ENCODE measurements at regions of chr2 and their contacts with region 1.

Region 1: DNA sequence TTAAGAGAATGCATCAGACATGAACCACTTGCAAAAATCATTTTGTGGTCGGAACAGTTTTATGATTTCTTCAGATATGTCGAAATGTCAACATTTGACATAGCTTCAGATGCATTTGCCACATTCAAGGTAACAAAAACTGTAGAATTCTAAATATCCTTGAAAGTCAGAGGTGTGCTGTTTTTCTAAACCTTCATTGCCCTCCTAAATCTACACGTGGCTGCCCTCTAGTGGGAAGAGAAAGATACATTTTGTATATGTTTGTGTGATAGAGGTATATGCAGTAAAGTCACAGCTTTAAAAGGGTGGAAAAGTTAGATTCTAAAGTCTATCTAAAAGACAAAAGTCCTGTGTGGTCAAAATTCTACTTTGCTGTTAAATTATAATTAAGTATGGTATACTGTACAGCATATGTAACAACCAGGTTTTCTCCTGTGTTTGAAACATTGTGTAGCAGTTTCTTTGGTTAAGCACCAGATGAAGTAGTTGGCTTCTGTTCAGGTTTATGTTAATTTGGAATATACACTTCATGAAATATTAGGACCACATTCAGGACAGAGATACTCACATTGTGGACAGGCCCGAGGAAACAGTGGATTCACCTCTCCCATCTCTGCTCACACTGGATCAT is 65.9 kb upstream of the ITM2C start:
- DNase-seq: no peak
- H3K4me3 ChIP-seq: no peak overlapping the region
- CTCF ChIP-seq: peak; percentile 69

Region 2: GRCh38 chr2:230680463-230681170 is 118.3 kb before region 1 on chr2:
- CTCF ChIA-PET with region 1: interaction called, 14 read pairs
- POLR2A ChIA-PET with region 1: no interaction called
- DNase-seq: no peak
- H3K4me3 ChIP-seq: no peak overlapping the region
- CTCF ChIP-seq: no peak

Region 3: DNA sequence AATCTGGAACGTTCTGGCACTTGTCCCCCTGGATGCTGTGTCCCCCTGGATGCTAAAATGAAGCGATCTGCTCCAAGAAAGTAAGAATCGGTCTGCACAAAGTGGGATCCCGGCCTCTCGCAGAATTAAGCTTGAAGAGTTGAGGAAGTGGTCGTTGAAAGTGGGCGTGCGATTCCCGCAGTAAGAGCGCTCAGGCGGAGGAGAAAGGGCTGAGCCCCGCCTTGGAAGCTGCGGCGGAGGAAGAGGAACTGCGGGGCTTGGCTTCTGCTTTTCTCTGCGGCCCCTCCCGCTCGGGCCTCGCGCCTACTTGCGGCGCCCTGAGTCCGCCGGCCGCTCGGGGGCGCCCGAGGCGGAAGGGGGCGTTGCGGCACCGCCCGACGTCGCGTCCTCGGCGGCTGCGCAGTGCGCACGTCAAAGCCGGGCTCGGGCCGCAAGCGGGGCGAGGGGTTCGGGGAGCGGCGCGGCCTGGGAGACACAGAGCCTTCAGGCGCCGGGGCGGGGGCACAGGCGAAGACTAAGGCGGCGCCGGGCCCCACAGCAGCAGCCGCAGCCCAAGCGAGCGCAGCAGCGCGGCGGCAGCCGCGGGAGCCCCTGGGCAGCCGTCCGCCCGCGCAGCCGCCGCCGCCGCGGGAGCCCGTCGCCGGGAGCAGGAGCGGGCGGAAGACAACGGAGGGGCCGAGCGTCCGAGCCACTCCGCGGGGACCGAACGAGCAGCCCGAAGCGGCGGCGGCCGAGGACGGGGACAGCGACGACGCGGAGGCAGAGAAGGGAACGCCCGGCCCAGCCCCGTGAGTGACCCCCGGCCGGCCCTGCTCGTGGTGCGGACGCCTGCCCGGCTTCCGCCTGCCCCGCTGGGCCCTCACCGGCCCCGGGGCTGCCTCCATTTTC is 86.2 kb before region 1 on chr2 and contains the start of gene CAB39:
- CTCF ChIA-PET with region 1: interaction called, 80 read pairs
- POLR2A ChIA-PET with region 1: interaction called, 4 read pairs
- DNase-seq: no peak
- H3K4me3 ChIP-seq: peak within 1 kb of the TSS; percentile 77
- CTCF ChIP-seq: peak; percentile 85

Region 4: DNA sequence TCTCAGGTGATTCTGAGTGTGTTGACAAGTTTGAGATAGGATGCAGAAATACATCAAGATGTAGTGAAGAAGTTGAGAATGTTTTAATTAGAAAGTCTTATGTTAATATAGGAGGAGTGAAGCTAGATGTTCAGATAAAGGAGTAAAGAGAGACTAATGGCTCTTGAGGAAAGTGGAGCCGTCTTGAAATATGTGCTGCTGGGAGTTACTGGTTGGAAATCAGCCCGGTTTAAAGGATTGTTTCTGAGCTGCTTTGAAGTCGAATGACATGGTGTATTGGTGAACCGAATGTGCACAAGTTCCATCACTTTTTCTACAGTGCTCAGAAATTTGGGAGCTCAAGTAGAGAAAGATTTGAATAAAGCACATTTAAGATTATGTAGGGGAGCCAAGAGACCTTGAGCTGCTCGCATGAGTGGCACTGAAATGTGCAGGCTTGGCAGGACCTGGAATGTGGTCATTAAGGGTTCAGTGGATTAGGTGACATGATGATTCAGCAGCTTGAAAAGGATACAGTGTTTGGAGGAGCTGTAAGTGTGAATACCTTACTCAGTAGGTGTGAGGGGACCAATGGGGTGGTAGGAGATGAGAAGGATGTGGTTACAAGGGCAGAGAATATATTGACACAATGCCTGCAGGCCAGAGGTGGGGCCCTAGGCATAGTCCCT is 17.6 kb before region 1 on chr2:
- CTCF ChIA-PET with region 1: interaction called, 18 read pairs
- POLR2A ChIA-PET with region 1: no interaction called
- DNase-seq: no peak
- H3K4me3 ChIP-seq: no peak overlapping the region
- CTCF ChIP-seq: no peak

Region 5: DNA sequence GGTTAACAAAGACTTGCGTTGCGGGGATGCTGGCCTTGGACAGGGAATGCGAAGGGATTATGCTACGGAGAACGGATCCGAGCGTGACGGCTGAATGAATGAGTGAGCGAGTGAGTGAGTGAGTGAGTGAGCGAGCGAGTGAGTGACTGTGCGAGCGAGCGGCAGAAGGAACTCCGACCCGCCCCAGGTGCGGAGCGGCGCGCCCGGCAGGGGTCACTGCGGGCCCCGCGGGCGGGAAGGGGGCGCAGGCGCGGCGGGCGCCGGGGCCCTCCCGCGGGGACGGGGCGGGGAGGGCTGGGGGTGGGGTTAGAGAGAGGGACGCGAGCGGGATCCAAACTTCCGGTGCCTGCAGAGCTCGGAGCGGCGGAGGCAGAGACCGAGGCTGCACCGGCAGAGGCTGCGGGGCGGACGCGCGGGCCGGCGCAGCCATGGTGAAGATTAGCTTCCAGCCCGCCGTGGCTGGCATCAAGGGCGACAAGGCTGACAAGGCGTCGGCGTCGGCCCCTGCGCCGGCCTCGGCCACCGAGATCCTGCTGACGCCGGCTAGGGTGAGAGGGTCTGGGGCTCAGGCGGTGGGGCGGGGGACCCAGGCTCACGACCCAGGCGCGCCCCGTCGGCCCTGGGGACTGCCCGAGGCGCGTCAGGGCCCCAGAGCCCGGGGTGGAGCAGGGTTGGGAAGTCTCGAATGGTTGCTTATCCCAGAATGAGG is 65.9 kb after region 1 on chr2 and contains the start of gene ITM2C:
- CTCF ChIA-PET with region 1: no interaction called
- POLR2A ChIA-PET with region 1: no interaction called
- DNase-seq: no peak
- H3K4me3 ChIP-seq: peak within 1 kb of the TSS; percentile 85
- CTCF ChIP-seq: peak; percentile 57

Measured in AG04449 (cell line).